ENCODE measurements at regions of chrX and their contacts with region 1.

Region 1: GRCh38 chrX:136745215-136746173 is 35.2 kb downstream of the ARHGEF6 start:
- DNase-seq: no peak
- H3K4me3 Mint-ChIP-seq: peak overlapping the region; percentile 59
- H3K27ac Mint-ChIP-seq: peak overlapping the region; percentile 79
- H3K4me1 Mint-ChIP-seq: peaks cover 79% of the 10 kb centered on the region
- H3K27me3 Mint-ChIP-seq: no peaks in the 10 kb centered on the region

Region 2: GRCh38 chrX:135931644-135932487 is 813.6 kb before region 1 on chrX:
- intact Hi-C with region 1: no loop called
- DNase-seq: peak; percentile 4
- H3K4me3 Mint-ChIP-seq: no peak overlapping the region
- H3K27ac Mint-ChIP-seq: no peak overlapping the region
- H3K4me1 Mint-ChIP-seq: no peaks in the 10 kb centered on the region
- H3K27me3 Mint-ChIP-seq: peaks cover 1% of the 10 kb centered on the region

Region 3: GRCh38 chrX:136468391-136469103 is 276.9 kb before region 1 on chrX:
- intact Hi-C with region 1: no loop called
- DNase-seq: no peak
- H3K4me3 Mint-ChIP-seq: no peak overlapping the region
- H3K27ac Mint-ChIP-seq: no peak overlapping the region
- H3K4me1 Mint-ChIP-seq: no peaks in the 10 kb centered on the region
- H3K27me3 Mint-ChIP-seq: peaks cover 2% of the 10 kb centered on the region

Region 4: DNA sequence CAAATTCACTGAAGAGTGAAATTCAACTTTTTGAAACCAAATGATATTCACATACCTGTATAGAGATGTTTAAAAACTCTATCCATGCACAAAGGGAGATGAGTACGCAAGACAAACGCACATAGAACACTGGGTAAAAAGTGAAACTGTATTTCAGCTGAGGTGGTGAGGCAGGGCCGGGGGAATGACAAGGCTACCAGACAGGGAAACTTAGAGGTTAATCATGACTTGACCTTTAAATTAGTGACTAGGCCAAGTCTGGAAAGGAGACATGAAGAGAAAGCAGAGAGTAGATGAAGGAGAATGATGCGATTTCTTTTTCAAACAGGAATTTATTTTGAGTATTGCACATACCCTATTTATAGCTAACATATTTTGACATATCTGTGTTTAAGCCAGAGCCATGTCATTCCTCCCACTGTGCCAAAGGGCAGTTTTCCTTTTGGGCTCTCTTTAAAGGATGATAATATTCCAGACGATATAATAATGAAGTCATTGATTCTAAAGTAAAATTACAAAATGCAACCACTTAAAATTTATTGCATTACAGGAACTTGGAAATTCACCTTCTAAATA is 14.2 kb before region 1 on chrX:
- intact Hi-C with region 1: loop called (anchors 2 kb)
- DNase-seq: no peak
- H3K4me3 Mint-ChIP-seq: peak overlapping the region; percentile 45
- H3K27ac Mint-ChIP-seq: peak overlapping the region; percentile 70
- H3K4me1 Mint-ChIP-seq: peaks cover 48% of the 10 kb centered on the region
- H3K27me3 Mint-ChIP-seq: no peaks in the 10 kb centered on the region